ENCODE measurements at regions of chr7 and their contacts with region 1.

Region 1: DNA sequence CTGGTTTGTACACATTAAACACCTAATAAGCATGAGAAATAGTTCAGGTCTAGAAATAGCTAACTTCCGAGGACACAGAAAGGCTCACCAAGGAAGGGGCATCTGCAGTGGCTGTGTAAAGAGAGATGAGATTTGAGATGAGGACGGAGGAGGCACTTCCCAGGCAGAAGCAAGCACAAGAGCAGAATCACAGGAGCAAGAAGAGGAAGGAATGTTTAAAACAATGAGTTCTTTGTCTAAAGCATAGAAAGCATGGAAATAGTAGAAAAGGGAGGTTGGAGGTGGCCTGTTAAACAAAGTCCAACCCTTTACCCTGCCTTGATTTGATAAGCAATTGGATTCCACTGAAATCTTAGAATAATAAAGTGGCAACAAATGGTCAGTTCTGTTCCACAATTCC is 11.6 kb upstream of the PON3 start:
- DNase-seq: no peak
- H3K27ac ChIP-seq: no peak overlapping the region
- CTCF ChIP-seq: no peak

Region 2: DNA sequence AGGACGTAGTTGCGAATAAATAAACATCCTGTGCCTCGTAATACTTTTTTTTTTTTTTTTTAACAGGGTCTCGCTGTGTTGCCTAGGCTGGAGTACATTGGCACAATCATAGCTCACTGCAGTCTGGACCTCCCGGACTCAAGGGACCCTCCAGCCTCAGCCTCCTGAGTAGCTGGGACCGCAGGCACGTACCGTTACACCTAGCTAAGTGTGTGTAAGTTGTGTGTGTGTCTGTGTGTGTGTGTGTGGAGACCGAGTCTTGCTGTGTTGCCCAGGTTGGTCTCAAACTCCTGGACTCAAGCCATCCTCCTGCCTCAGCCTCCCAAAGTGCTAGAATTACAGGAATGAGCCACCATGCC is 27.6 kb after region 1 on chr7:
- CTCF ChIA-PET with region 1: no interaction called
- POLR2A ChIA-PET with region 1: interaction called, 10 read pairs
- DNase-seq: no peak
- H3K27ac ChIP-seq: peak overlapping the region; percentile 82
- CTCF ChIP-seq: no peak

Region 3: DNA sequence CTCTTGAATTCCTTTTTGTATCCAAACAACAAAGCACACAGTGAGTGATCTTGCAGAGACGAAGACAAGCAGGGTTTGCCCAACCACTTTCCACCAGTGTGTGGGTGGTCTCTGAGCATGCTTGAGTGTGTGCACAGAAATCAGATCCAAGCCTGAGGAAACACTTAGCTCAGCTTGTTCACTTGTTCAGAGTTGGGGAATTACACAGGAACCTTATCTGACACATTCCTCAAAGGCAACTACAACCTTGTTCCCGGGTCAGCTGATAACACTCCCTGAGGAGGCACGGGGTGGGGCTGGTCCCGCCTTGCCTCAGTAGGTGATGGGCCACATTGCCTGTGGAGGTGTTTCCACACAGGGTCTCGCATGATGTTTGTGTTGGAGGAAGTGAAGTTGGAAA is 581.5 kb after region 1 on chr7:
- CTCF ChIA-PET with region 1: no interaction called
- POLR2A ChIA-PET with region 1: no interaction called
- DNase-seq: no peak
- H3K27ac ChIP-seq: no peak overlapping the region
- CTCF ChIP-seq: no peak